ENCODE measurements at regions of chr11 and their contacts with region 1.

Region 1: DNA sequence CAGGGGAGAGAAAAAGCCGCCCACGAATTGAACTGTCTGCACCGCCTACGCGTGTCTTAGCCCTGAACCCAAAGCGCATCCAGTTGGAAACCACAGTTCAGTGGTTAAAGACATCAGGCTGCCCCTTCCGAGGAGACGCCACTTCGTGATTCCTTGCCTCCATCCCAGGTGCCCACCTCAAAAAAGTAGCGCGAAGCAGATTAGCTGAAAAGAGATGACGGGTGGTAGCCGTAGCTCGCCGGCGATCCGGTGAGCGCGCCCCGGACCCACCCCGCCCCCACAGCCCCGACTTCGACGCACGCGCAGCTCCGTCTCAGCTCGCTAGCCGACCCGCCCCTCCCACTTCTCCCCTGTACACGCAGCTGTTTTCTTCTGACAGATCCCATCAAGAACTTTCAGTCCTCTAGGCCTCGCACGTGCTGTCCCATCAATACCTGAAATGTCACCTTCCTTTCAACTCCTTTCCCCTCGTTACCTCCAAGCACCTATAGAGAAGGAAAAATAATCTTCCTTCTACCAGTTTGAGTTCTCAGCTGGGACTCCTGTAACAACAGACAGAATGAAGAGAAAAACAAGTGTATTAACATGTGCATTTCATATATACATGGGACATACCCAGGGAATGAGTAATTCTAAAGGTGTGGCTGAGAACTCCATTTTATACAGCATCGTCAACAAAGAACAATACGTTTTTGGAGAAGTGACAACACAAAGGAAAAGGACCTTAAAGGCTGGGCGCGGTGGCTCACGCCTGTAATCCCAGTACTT is 49.5 kb downstream of the OR4D9 start:
- DNase-seq: peak; percentile 90
- H3K4me3 Mint-ChIP-seq: peak overlapping the region; percentile 93
- H3K27ac Mint-ChIP-seq: peak overlapping the region; percentile 96
- H3K4me1 Mint-ChIP-seq: peaks cover 42% of the 10 kb centered on the region
- H3K27me3 Mint-ChIP-seq: peaks cover 4% of the 10 kb centered on the region

Region 2: DNA sequence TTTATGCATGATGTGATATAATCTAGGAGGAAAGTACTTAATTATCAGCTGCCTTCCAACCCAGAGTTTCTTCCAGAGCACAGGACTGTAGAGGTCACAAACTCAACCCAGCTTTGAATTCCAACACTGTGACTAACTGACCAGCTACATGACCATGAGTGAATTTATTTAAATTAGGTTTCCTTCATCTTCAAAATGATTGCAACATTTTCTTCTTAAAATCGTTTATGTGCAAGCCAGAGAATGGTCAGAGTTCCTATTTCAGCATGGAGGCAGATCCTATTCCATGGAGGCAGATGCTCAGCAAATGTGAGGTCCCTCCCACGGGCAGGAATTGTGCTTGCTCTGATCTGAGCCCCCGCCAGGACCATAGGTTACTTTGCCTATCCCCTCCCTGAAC is 12.3 kb after region 1 on chr11:
- CTCF ChIA-PET with region 1: no interaction called
- POLR2A ChIA-PET with region 1: no interaction called
- intact Hi-C with region 1: no loop called
- DNase-seq: no peak
- H3K4me3 Mint-ChIP-seq: no peak overlapping the region
- H3K27ac Mint-ChIP-seq: no peak overlapping the region
- H3K4me1 Mint-ChIP-seq: no peaks in the 10 kb centered on the region
- H3K27me3 Mint-ChIP-seq: no peaks in the 10 kb centered on the region

Region 3: GRCh38 chr11:59857444-59858434 is 296.9 kb after region 1 on chr11:
- CTCF ChIA-PET with region 1: no interaction called
- POLR2A ChIA-PET with region 1: no interaction called
- intact Hi-C with region 1: loop called (anchors 5 kb)
- DNase-seq: peak; percentile 47
- H3K4me3 Mint-ChIP-seq: peak overlapping the region; percentile 21
- H3K27ac Mint-ChIP-seq: peak overlapping the region; percentile 80
- H3K4me1 Mint-ChIP-seq: peaks cover 29% of the 10 kb centered on the region
- H3K27me3 Mint-ChIP-seq: no peaks in the 10 kb centered on the region

Measured in activated CD4-positive, alpha-beta memory T cell treated with anti-CD3 and anti-CD28 coated beads for 36 hours (primary cell).